Gastrocnemius medialis (tissue), 4 donors: ENCODE measurements at regions of chr19 and their contacts with region 1.

Region 1: GRCh38 chr19:39539519-39540332 is at the start of gene EID2:
- DNase-seq: peak; percentile 94 to 95
- ATAC-seq: peak; percentile 99
- H3K4me3 ChIP-seq: peak within 1 kb of the TSS; percentile 69 to 95 (median 84)
- H3K27ac ChIP-seq: peak within 1 kb of the TSS; percentile 87 to 96 (median 94)
- H3K4me1 ChIP-seq: peaks cover 17 to 25% of the 10 kb centered on the region in 2 donors
- H3K27me3 ChIP-seq: no peaks in the 10 kb centered on the region
- CTCF ChIP-seq: peak; percentile 51 to 95 (median 86)
- POLR2A ChIP-seq: peak; percentile 86 to 87
- total RNA-seq, gene EID2: 7.8 to 12.7 (median 9.4) TPM

Region 2: GRCh38 chr19:39480337-39481228 is 59.1 kb before region 1 on chr19 and contains the start of gene TIMM50:
- in situ Hi-C with region 1: loop called in 2 of 4 experiments (anchors 5 kb)
- intact Hi-C with region 1: no loop called
- DNase-seq: peak; percentile 91 to 97
- ATAC-seq: peak; percentile 97 to 98
- H3K4me3 ChIP-seq: peak within 1 kb of the TSS; percentile 92 to 100 (median 99)
- H3K27ac ChIP-seq: peak within 1 kb of the TSS; percentile 88 to 95 (median 92)
- H3K4me1 ChIP-seq: peaks cover 11% of the 10 kb centered on the region in 2 donors
- H3K27me3 ChIP-seq: no peaks in the 10 kb centered on the region
- CTCF ChIP-seq: no peak
- POLR2A ChIP-seq: peak; percentile 44 to 71
- total RNA-seq, gene TIMM50: 66.9 to 97.6 (median 85.6) TPM

Region 3: DNA sequence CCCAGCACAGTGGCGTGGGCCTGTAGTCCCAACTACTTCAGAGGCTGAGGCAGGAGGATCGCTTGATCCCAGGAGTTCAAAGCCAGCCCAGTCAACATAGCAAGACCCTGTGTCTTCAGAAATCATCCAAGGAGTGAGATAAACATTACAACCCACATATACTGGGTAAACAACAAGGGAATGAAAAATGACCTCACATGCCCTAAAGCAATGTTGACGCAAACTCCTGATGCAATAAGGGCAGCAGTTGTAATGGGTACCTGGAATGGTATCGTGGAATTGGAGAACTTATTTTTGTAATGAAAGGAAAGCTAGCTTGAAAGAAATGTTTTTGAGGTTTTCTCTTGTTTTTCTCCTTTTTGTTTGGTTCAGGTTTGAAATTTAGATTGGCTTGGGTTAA is 91.5 kb after region 1 on chr19:
- in situ Hi-C with region 1: no loop called
- intact Hi-C with region 1: no loop called
- DNase-seq: no peak
- ATAC-seq: no peak
- H3K4me3 ChIP-seq: no peak overlapping the region
- H3K27ac ChIP-seq: no peak overlapping the region
- H3K4me1 ChIP-seq: no peaks in the 10 kb centered on the region
- H3K27me3 ChIP-seq: no peaks in the 10 kb centered on the region
- CTCF ChIP-seq: no peak
- POLR2A ChIP-seq: no peak

Region 4: DNA sequence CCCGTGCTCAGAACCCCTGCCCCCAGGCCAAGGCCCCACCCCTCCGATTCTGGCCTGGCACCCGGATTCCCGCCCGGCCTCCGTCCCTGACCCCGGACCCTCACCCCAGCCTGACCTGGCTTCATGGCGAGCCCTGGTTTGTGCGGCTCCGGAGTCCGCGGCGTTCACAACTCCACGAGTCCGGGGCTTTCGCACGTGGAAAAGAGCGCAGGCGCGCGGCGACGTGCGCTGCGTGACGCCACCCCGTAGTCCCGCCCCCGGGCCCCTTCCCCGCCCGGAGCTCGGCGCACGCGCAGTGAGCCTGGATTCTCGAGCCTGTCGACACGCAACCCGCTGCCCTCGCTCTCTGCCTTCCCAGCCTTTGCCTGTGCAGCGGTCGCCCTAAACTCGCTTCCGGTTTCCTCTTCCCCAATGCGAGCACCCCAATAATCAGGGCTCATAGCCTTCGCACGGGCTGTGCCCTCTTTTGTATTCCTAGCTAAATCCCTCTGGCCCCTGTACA is 306.5 kb after region 1 on chr19 and contains the start of gene FBL:
- in situ Hi-C with region 1: loop called in 1 of 4 experiments (anchors 25 kb)
- intact Hi-C with region 1: loop called (anchors 10 kb)
- DNase-seq: peak; percentile 86 to 93
- ATAC-seq: peak; percentile 88 to 91
- H3K4me3 ChIP-seq: peak within 1 kb of the TSS; percentile 78 to 99 (median 88)
- H3K27ac ChIP-seq: peak within 1 kb of the TSS; percentile 93 to 96 (median 96)
- H3K4me1 ChIP-seq: peaks cover 38 to 50% of the 10 kb centered on the region in 2 donors
- H3K27me3 ChIP-seq: no peaks in the 10 kb centered on the region
- CTCF ChIP-seq: no peak
- POLR2A ChIP-seq: peak; percentile 72 to 75
- total RNA-seq, gene FBL: 40.4 to 79.4 (median 67.0) TPM